ENCODE measurements at regions of chr3 and their contacts with region 1.

Region 1: DNA sequence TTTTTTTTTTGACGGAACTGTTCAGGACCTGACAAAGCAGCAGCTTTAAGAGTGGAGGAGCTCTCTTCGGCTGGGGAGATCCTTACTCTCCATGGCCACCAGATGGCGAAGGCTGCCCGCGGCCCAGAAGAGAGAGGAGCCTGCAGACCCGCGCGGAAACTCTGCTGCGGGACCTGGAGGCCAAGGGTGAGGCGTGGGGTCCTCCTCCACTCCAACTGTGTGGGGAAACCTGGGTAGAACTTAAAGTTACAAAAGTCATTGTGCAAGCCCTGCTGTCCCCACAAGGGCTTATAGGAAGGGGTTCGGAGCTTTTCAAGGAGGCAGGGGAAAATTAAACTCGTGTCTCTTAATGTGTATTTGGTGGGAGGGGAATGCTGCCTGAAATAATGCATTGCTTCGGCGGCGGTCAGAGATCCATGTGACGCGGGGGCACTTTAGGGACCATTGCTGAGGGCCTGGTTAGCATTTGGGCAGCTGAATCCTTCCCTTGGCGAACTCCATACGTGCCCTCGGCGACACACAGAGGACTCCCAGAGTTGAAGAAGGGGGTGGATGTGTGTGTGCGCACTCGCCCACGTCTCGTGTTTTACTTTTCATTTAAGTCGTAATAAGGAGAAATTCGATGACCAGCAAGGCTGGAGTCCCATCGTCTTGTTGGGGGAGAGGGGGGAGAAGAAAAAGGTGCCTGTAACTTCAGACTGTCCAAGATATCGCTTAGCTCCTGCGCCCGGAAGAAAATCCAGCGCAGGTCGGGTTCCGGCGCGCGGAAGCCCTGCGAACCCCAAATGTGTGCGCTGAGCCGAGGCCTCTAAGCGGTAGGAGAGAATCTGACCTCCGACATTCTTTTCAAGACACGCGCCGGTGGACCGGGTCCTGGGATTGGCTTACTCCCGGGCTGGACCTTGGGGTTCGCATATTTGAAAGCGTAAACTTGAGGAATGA is 9.7 kb downstream of the EOMES start:
- DNase-seq: peak; percentile 73 to 78
- H3K4me3 ChIP-seq: peak overlapping the region; percentile 31
- H3K4me3 Mint-ChIP-seq: peak overlapping the region; percentile 82
- H3K27ac Mint-ChIP-seq: no peak overlapping the region
- H3K4me1 ChIP-seq: peaks cover 18% of the 10 kb centered on the region; the same call in 1 of the 2 replicates
- H3K4me1 Mint-ChIP-seq: peaks cover 24% of the 10 kb centered on the region
- H3K27me3 ChIP-seq: peaks cover 5% of the 10 kb centered on the region
- H3K27me3 Mint-ChIP-seq: peaks cover 38% of the 10 kb centered on the region
- CTCF ChIP-seq: peak; percentile 74 to 87

Region 2: DNA sequence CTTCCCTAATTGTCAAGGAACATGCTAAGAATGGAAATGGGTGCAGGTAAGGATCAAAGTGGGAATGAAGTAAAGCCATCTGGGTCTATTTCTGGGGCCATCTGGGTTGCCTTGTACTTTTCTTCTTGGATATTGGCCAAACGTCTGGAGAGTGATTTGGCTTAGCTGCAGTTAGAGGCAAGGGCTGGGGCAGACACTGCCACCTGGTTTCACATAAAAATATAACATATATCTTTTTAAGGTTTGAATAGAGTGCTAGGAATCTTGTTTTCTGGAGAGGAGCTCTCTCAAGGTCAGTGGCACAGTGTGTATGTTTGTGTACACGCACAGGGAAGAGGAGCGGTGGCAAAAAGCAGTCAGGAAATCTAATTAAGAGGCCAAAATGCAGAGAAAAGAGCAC is 34.4 kb after region 1 on chr3:
- CTCF ChIA-PET with region 1: interaction called, 3 read pairs
- POLR2A ChIA-PET with region 1: no interaction called
- intact Hi-C with region 1: loop called (anchors 2 kb)
- DNase-seq: no peak
- H3K4me3 ChIP-seq: no peak overlapping the region
- H3K4me3 Mint-ChIP-seq: no peak overlapping the region
- H3K27ac Mint-ChIP-seq: no peak overlapping the region
- H3K4me1 ChIP-seq: no peaks in the 10 kb centered on the region
- H3K4me1 Mint-ChIP-seq: no peaks in the 10 kb centered on the region
- H3K27me3 ChIP-seq: no peaks in the 10 kb centered on the region
- H3K27me3 Mint-ChIP-seq: peaks cover 9% of the 10 kb centered on the region
- CTCF ChIP-seq: no peak

Region 3: DNA sequence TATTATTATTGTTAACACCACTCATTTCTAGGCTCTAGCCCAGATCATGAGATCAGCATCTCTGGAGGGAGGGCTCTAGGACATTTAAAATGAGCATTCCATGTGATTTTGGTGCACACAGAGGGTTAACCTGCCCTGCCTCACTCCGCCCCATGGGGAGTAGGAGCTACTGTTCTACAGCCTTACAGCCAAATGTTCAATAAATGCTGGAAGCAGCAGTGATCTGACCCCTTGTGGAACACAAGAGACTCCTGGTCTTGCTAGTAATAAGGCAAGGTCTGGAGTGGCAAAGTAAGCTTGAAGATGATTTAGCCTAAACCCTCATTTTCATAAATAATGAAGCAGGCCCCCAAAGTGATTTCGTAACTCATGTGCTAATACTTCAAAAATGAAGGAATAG is 176.2 kb after region 1 on chr3:
- CTCF ChIA-PET with region 1: interaction called, 9 read pairs
- POLR2A ChIA-PET with region 1: no interaction called
- intact Hi-C with region 1: loop called (anchors 2 kb)
- DNase-seq: peak in 1 of 2 experiments; percentile 2
- H3K4me3 ChIP-seq: no peak overlapping the region
- H3K4me3 Mint-ChIP-seq: no peak overlapping the region
- H3K27ac Mint-ChIP-seq: no peak overlapping the region
- H3K4me1 ChIP-seq: no peaks in the 10 kb centered on the region
- H3K4me1 Mint-ChIP-seq: no peaks in the 10 kb centered on the region
- H3K27me3 ChIP-seq: no peaks in the 10 kb centered on the region
- H3K27me3 Mint-ChIP-seq: no peaks in the 10 kb centered on the region
- CTCF ChIP-seq: peak in 1 of 2 experiments; percentile 14

Region 4: DNA sequence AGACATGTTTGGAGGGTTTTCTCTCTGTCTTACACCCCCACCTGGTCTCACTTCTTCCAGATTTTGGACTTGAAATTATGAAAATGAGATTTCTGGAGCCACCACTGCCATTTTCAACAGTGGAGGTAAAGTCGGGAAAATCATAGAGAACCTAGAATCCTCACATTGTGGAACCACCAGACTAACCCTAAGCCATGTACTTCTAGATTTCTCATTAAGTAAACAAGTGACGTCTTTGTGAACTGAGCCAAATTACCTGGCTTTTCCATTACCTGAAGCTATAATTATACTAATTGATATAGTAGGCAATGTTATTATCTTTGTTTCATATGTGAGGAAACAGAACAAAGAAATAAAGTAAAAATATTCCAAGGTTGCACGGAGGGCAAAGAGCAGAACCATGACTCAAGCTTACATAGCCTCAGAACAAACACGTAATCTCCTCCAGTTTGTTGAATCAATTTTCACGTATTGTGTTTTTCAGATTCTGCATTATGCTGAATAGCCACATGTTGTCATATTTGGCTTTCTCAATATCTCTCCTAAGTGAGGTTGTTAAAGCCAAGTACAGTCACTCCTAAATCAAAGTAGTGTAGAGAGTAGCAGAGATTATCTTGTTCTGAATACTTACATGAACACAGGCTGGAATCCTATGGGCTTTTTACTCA is 427.7 kb after region 1 on chr3:
- CTCF ChIA-PET with region 1: no interaction called
- POLR2A ChIA-PET with region 1: no interaction called
- intact Hi-C with region 1: loop called (anchors 10 kb)
- DNase-seq: no peak
- H3K4me3 ChIP-seq: no peak overlapping the region
- H3K4me3 Mint-ChIP-seq: no peak overlapping the region
- H3K27ac Mint-ChIP-seq: no peak overlapping the region
- H3K4me1 ChIP-seq: peaks cover 7% of the 10 kb centered on the region
- H3K4me1 Mint-ChIP-seq: peaks cover 20% of the 10 kb centered on the region
- H3K27me3 ChIP-seq: no peaks in the 10 kb centered on the region
- H3K27me3 Mint-ChIP-seq: no peaks in the 10 kb centered on the region
- CTCF ChIP-seq: no peak

Region 5: DNA sequence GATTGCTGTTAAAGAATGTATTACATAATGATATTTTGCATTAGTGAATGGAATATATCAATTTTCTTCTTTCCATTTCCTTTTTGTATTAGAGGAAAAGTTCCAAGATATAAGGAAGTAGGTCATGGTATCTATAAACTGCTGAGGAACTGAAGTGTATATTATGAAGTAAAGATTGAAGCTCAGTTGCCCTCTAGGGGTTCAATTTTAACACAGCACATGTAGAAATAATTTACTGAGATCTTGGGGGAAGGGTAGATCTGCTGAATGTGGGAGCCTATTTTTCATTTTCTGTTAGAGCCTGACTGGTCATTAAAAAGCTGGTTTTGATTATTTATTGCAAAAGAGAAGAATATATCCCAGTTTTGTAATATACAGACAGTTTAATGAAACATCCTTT is 574.2 kb after region 1 on chr3:
- CTCF ChIA-PET with region 1: interaction called, 7 read pairs
- POLR2A ChIA-PET with region 1: no interaction called
- intact Hi-C with region 1: loop called (anchors 1 kb)
- DNase-seq: peak in 1 of 2 experiments; percentile 8
- H3K4me3 ChIP-seq: no peak overlapping the region
- H3K4me3 Mint-ChIP-seq: no peak overlapping the region
- H3K27ac Mint-ChIP-seq: no peak overlapping the region
- H3K4me1 ChIP-seq: no peaks in the 10 kb centered on the region
- H3K4me1 Mint-ChIP-seq: no peaks in the 10 kb centered on the region
- H3K27me3 ChIP-seq: no peaks in the 10 kb centered on the region
- H3K27me3 Mint-ChIP-seq: no peaks in the 10 kb centered on the region
- CTCF ChIP-seq: peak; percentile 32 to 53

Region 6: DNA sequence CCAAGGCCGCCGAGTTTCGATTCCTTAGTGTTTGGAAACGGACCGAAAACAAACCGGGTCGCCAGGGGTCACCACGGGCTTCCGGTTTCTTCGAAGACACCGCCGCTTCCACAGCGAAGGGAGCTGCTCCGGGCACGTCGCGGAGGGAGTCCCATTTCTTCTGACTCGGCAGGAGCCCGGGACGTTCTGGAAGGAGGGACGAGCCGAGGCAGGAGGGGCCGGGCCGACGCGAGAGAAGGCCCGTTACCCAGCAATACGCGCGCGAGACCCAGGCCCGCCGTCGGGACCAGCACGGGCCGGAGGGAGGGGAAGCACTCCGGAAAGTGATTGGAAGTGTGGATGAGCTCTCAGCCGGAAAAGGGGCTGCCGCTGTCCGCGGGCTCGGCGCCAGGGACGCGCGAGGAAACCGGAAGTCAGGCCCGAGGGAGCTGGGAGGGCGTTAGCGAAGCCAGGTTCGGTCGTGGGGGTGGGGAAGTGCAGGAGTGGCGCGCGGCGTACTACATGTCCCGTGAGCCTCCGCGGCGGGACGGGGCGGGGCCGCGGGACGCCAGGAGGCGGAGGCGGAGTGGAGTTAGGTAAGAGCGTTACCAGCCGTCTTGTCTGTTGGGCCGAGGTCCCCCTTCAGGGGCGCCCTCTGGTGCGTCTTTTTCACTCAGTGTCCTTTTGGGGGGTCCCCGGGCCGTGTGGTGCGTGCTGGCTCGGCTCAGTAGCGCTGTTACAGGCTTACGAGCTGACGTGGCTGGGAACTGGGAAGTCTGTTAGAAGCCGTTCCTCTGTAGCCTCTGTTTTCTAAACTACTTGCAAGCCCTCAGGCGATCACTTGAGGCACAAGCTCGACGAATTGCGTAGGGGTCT is 636.4 kb after region 1 on chr3 and contains the starts of genes AZI2 and ZCWPW2:
- CTCF ChIA-PET with region 1: no interaction called
- POLR2A ChIA-PET with region 1: no interaction called
- intact Hi-C with region 1: loop called (anchors 5 kb)
- DNase-seq: peak; percentile 93 to 94
- H3K4me3 ChIP-seq: peak within 1 kb of the TSS; percentile 69
- H3K4me3 Mint-ChIP-seq: peak within 1 kb of the TSS; percentile 99
- H3K27ac Mint-ChIP-seq: peak within 1 kb of the TSS; percentile 99
- H3K4me1 ChIP-seq: no peaks in the 10 kb centered on the region
- H3K4me1 Mint-ChIP-seq: peaks cover 7% of the 10 kb centered on the region
- H3K27me3 ChIP-seq: no peaks in the 10 kb centered on the region
- H3K27me3 Mint-ChIP-seq: no peaks in the 10 kb centered on the region
- CTCF ChIP-seq: peak in 1 of 2 experiments; percentile 38
- total RNA-seq, gene AZI2: 48.9 and 57.4 TPM in 2 replicates
- total RNA-seq, gene ZCWPW2: 0.18 and 0.46 TPM in 2 replicates